Mammary epithelial cell (primary cell): ENCODE measurements at regions of chr4 and their contacts with region 1.

Region 1: DNA sequence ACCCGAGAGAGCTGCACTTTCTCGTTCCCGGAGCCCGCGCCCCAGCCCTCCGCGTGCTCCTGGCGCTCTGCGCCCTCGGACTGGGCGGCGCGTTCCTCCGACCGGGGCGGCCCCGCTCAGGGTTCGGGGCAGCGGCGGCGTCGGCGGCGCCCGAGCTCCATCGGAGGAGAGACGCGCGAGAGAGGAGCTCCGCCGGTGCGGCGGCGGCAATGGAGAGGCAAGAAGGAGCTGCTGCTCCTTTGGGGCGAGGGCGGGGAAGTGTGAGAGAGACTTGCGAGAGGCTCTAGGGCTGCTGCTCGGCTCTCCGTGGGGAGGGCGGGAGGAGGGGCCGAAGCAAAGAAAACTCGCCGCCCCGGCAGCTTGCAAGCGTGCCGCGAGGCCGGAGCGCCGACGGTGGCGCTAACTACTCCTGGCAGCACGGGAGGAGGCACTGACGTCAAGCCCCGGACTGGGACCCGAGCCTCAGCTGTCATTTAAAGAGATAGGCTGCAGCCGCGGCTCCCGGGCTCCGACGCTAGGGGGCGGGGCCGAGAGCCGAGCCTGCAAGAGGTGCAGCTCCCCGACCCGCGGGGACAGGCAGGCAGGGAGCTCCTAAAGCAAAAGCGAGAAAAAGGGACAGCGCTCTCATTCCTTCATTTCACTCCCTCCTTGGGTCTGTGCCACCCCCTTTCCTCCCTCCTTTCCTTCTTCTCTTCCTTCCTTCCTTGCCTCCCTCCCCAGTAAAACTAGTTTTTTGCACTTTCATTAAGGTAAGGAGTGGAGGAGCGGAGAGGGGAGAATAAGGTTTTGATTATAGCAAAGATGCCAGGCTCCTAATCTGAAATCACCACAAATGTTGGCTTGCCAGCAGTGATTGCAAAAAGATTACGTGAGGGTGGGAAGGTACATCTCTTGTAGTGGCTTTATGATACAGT is at the start of gene KCTD8:
- DNase-seq: peak; percentile 81
- H3K4me3 ChIP-seq: peak within 1 kb of the TSS; percentile 55 to 60 (median 57)
- H3K27ac ChIP-seq: no peak within 1 kb of the TSS
- H3K4me1 ChIP-seq: peaks cover 15% of the 10 kb centered on the region
- H3K27me3 ChIP-seq: peaks cover 38% of the 10 kb centered on the region
- CTCF ChIP-seq: peak; percentile 48 to 82
- total RNA-seq, gene KCTD8: not detected

Region 2: GRCh38 chr4:44493924-44494323 is 45.1 kb after region 1 on chr4:
- CTCF ChIA-PET with region 1: interaction called, 15 read pairs
- dilution Hi-C with region 1: no loop called
- in situ Hi-C with region 1: no loop called
- intact Hi-C with region 1: loop called (anchors 5 kb)
- DNase-seq: peak; percentile 8
- H3K4me3 ChIP-seq: no peak overlapping the region
- H3K27ac ChIP-seq: no peak overlapping the region
- H3K4me1 ChIP-seq: peaks cover 11% of the 10 kb centered on the region
- H3K27me3 ChIP-seq: no peaks in the 10 kb centered on the region
- CTCF ChIP-seq: peak; percentile 40 to 55

Region 3: DNA sequence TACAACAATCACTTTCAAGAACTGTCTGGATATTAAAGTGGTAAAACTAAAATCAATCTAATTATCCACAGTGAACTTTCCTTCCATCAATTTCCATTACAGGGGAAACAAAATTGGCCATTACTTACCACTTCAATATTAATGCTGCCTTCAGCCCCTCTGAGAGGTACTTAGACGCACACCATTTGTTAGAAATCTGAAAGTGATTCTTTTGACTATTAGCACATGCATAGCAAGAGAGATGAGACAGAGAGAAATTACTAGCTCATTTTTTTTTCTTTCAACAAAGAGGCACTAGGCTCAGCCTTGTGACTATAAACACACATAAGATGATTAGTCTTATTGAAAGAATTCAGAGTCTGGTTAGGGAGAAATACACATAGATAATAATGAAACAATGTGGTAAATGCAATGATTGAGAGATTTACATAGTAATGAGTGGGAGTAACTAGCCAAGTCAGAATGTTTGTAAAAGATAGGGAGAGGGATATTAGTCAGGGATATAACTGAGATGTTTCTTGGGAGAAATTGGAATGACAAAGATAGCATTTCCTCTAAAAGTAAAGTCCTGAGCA is 109.3 kb after region 1 on chr4:
- CTCF ChIA-PET with region 1: no interaction called
- dilution Hi-C with region 1: no loop called
- in situ Hi-C with region 1: no loop called
- intact Hi-C with region 1: loop called (anchors 10 kb)
- DNase-seq: peak; percentile 9
- H3K4me3 ChIP-seq: no peak overlapping the region
- H3K27ac ChIP-seq: no peak overlapping the region
- H3K4me1 ChIP-seq: no peaks in the 10 kb centered on the region
- H3K27me3 ChIP-seq: no peaks in the 10 kb centered on the region
- CTCF ChIP-seq: no peak

Region 4: DNA sequence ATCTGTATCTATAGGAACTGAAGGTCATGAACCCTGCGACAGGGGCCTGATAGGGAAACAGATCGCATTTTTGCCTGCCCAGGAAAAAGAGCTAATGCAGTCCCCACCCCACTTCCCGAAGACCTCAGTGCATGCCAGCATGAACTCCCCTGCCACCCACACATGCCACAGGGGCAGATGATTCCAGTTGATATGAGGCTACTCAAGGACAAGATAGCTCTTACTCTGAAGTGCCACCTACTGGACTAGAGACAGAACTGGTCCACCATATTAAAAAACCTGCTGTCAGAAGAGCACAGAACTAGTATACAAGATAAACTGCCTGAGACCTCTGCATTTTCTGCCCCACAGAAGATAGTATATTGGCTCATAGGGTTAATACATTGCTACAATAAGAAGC is 134.6 kb after region 1 on chr4:
- CTCF ChIA-PET with region 1: interaction called, 5 read pairs
- dilution Hi-C with region 1: no loop called
- in situ Hi-C with region 1: no loop called
- intact Hi-C with region 1: loop called (anchors 1 kb)
- DNase-seq: peak; percentile 16
- H3K4me3 ChIP-seq: no peak overlapping the region
- H3K27ac ChIP-seq: no peak overlapping the region
- H3K4me1 ChIP-seq: no peaks in the 10 kb centered on the region
- H3K27me3 ChIP-seq: no peaks in the 10 kb centered on the region
- CTCF ChIP-seq: peak; percentile 48 to 60